B cell (primary cell): ENCODE measurements at regions of chr7 and their contacts with region 1.

Region 1: GRCh38 chr7:107661081-107661864 is 645 bp downstream of the SLC26A4 start:
- DNase-seq: peak; percentile 73
- ATAC-seq: peak; percentile 60
- H3K4me3 ChIP-seq: peak overlapping the region; percentile 41 to 72 (median 61)
- H3K4me3 Mint-ChIP-seq: peak overlapping the region; percentile 99
- H3K27ac ChIP-seq: no peak overlapping the region
- H3K27ac Mint-ChIP-seq: peak overlapping the region; percentile 72
- H3K4me1 ChIP-seq: peaks cover 25 to 26% of the 10 kb centered on the region in 2 donors
- H3K4me1 Mint-ChIP-seq: peaks cover 26% of the 10 kb centered on the region
- H3K27me3 ChIP-seq: peaks cover 0 to 28% (median 16%) of the 10 kb centered on the region in 4 experiments
- H3K27me3 Mint-ChIP-seq: peaks cover 30% of the 10 kb centered on the region
- CTCF ChIP-seq: no peak

Region 2: GRCh38 chr7:107462740-107463444 is 198.4 kb before region 1 on chr7:
- CTCF ChIA-PET with region 1: interaction called, 32 read pairs
- POLR2A ChIA-PET with region 1: no interaction called
- intact Hi-C with region 1: loop called (anchors 1 kb)
- DNase-seq: peak; percentile 67
- ATAC-seq: peak; percentile 72
- H3K4me3 ChIP-seq: no peak overlapping the region
- H3K4me3 Mint-ChIP-seq: no peak overlapping the region
- H3K27ac ChIP-seq: no peak overlapping the region
- H3K27ac Mint-ChIP-seq: no peak overlapping the region
- H3K4me1 ChIP-seq: no peaks in the 10 kb centered on the region
- H3K4me1 Mint-ChIP-seq: no peaks in the 10 kb centered on the region
- H3K27me3 ChIP-seq: no peaks in the 10 kb centered on the region
- H3K27me3 Mint-ChIP-seq: no peaks in the 10 kb centered on the region
- CTCF ChIP-seq: peak; percentile 79

Region 3: GRCh38 chr7:107563775-107564552 is 97.3 kb before region 1 on chr7 and contains the starts of genes COG5 and DUS4L:
- CTCF ChIA-PET with region 1: interaction called, 17 read pairs
- POLR2A ChIA-PET with region 1: interaction called, 6 read pairs
- intact Hi-C with region 1: loop called (anchors 1 kb)
- DNase-seq: peak; percentile 92
- ATAC-seq: peak; percentile 93
- H3K4me3 ChIP-seq: peak within 1 kb of the TSS; percentile 86 to 98 (median 93)
- H3K4me3 Mint-ChIP-seq: peak within 1 kb of the TSS; percentile 88
- H3K27ac ChIP-seq: peak within 1 kb of the TSS; percentile 88 to 94
- H3K27ac Mint-ChIP-seq: peak within 1 kb of the TSS; percentile 94
- H3K4me1 ChIP-seq: peaks cover 18 to 23% of the 10 kb centered on the region in 2 donors
- H3K4me1 Mint-ChIP-seq: peaks cover 50% of the 10 kb centered on the region
- H3K27me3 ChIP-seq: no peaks in the 10 kb centered on the region
- H3K27me3 Mint-ChIP-seq: no peaks in the 10 kb centered on the region
- CTCF ChIP-seq: no peak
- total RNA-seq, gene COG5: 73.0 and 74.8 TPM in 2 replicates
- total RNA-seq, gene DUS4L: 17.6 and 18.7 TPM in 2 replicates

Region 4: GRCh38 chr7:107579885-107580715 is 81.2 kb before region 1 on chr7 and contains the start of gene BCAP29:
- CTCF ChIA-PET with region 1: interaction called, 7 read pairs
- POLR2A ChIA-PET with region 1: no interaction called
- intact Hi-C with region 1: loop called (anchors 2 kb)
- DNase-seq: peak; percentile 87
- ATAC-seq: peak; percentile 98
- H3K4me3 ChIP-seq: peak within 1 kb of the TSS; percentile 75 to 93 (median 85)
- H3K4me3 Mint-ChIP-seq: peak within 1 kb of the TSS; percentile 85
- H3K27ac ChIP-seq: peak within 1 kb of the TSS; percentile 66 to 80
- H3K27ac Mint-ChIP-seq: peak within 1 kb of the TSS; percentile 79
- H3K4me1 ChIP-seq: peaks cover 4 to 7% of the 10 kb centered on the region in 2 donors
- H3K4me1 Mint-ChIP-seq: peaks cover 23% of the 10 kb centered on the region
- H3K27me3 ChIP-seq: no peaks in the 10 kb centered on the region
- H3K27me3 Mint-ChIP-seq: no peaks in the 10 kb centered on the region
- CTCF ChIP-seq: no peak
- total RNA-seq, gene BCAP29: 27.3 and 31.8 TPM in 2 replicates

Region 5: DNA sequence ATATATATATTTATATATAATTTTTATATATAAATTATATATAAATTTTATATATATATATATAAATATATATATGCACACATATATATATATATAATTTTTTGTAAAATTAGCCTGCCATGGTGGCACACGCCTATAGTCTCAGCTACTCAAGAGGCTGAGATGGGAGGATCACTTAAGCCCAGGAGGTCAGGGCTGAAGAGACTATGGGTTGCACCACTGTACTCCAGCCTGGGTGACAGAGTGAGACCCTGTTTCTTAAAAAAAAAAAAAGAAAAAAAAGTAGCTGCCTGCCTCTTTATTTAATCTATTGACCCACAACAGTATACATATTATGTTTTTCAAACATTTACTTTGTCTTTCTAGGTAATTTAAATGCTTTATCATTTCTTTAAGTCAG is 62.0 kb before region 1 on chr7:
- CTCF ChIA-PET with region 1: interaction called, 11 read pairs
- POLR2A ChIA-PET with region 1: no interaction called
- intact Hi-C with region 1: no loop called
- DNase-seq: no peak
- ATAC-seq: no peak
- H3K4me3 ChIP-seq: no peak overlapping the region
- H3K4me3 Mint-ChIP-seq: no peak overlapping the region
- H3K27ac ChIP-seq: no peak overlapping the region
- H3K27ac Mint-ChIP-seq: no peak overlapping the region
- H3K4me1 ChIP-seq: no peaks in the 10 kb centered on the region
- H3K4me1 Mint-ChIP-seq: no peaks in the 10 kb centered on the region
- H3K27me3 ChIP-seq: no peaks in the 10 kb centered on the region
- H3K27me3 Mint-ChIP-seq: no peaks in the 10 kb centered on the region
- CTCF ChIP-seq: no peak

Region 6: DNA sequence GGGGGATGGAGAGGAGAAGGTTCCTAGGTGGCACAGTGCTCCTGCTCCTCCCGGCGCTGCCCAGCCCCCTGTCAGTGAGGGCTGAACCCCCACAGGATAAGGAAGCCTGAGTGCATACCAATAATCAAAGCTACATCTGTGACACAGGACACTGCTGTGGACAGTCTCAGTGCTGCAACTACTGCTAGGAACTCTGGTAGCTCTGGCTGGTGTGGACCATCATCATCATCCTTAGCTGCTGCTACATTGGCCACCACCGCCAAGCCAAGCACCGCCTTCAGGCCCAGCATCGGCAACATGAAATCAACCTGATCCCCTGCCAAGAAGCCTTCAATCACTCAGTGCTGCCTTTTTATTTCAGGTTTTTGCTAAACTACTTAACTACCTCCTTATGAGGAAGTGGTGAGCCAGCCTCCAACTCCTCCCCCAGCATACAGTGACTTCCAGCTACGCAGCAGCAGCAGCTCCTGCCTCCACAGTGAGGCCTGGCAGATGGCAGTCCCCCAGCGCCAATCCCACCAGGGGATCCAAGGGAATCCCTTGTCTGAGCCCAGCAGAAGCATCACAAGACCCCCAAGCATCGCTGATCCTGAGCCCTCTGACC is 32.7 kb before region 1 on chr7:
- CTCF ChIA-PET with region 1: interaction called, 5 read pairs
- POLR2A ChIA-PET with region 1: no interaction called
- intact Hi-C with region 1: loop called (anchors 5 kb)
- DNase-seq: peak; percentile 61
- ATAC-seq: peak; percentile 92
- H3K4me3 ChIP-seq: no peak overlapping the region
- H3K4me3 Mint-ChIP-seq: peak overlapping the region; percentile 40
- H3K27ac ChIP-seq: peak overlapping the region in 1 of 2 donors; percentile 25
- H3K27ac Mint-ChIP-seq: peak overlapping the region; percentile 85
- H3K4me1 ChIP-seq: peaks cover 26 to 27% of the 10 kb centered on the region in 2 donors
- H3K4me1 Mint-ChIP-seq: peaks cover 33% of the 10 kb centered on the region
- H3K27me3 ChIP-seq: no peaks in the 10 kb centered on the region
- H3K27me3 Mint-ChIP-seq: no peaks in the 10 kb centered on the region
- CTCF ChIP-seq: no peak

Region 7: DNA sequence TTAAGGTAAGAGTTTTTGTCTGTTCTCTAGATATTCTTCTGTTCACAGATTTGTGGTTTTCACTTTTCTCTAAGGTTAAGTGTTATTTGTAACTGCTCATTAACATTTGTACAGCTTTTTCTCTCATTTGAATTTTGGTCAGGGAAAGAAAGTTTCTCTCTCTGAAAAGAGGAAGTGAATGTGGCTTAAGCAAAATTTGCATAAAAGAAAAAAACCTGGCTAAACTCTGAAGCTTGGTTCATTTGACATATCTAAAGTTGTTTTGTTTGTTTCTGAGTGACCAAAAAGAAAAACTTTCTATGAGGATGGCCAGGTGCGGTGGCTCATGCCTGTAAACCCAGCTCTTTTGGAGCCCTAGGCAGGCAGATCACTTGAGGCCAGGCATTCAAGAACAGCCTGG is 22.7 kb before region 1 on chr7:
- CTCF ChIA-PET with region 1: interaction called, 10 read pairs
- POLR2A ChIA-PET with region 1: interaction called, 3 read pairs
- intact Hi-C with region 1: loop called (anchors 1 kb)
- DNase-seq: peak; percentile 82
- ATAC-seq: peak; percentile 77
- H3K4me3 ChIP-seq: peak overlapping the region in 4 of 5 experiments; percentile 7 to 52 (median 26)
- H3K4me3 Mint-ChIP-seq: peak overlapping the region; percentile 77
- H3K27ac ChIP-seq: peak overlapping the region; percentile 78 to 85
- H3K27ac Mint-ChIP-seq: peak overlapping the region; percentile 96
- H3K4me1 ChIP-seq: peaks cover 44 to 56% of the 10 kb centered on the region in 2 donors
- H3K4me1 Mint-ChIP-seq: peaks cover 56% of the 10 kb centered on the region
- H3K27me3 ChIP-seq: no peaks in the 10 kb centered on the region
- H3K27me3 Mint-ChIP-seq: no peaks in the 10 kb centered on the region
- CTCF ChIP-seq: no peak